B cell (primary cell): ENCODE measurements at regions of chr1 and their contacts with region 1.

Region 1: GRCh38 chr1:24930204-24931145 is at the start of gene RUNX3:
- DNase-seq: peak; percentile 97
- ATAC-seq: peak; percentile 85
- H3K4me3 ChIP-seq: peak within 1 kb of the TSS; percentile 74 to 93 (median 78)
- H3K4me3 Mint-ChIP-seq: peak within 1 kb of the TSS; percentile 98
- H3K27ac ChIP-seq: peak within 1 kb of the TSS; percentile 95 to 97
- H3K27ac Mint-ChIP-seq: peak within 1 kb of the TSS; percentile 99
- H3K4me1 ChIP-seq: peaks cover 67 to 77% of the 10 kb centered on the region in 2 donors
- H3K4me1 Mint-ChIP-seq: peaks cover 72% of the 10 kb centered on the region
- H3K27me3 ChIP-seq: no peaks in the 10 kb centered on the region
- H3K27me3 Mint-ChIP-seq: no peaks in the 10 kb centered on the region
- CTCF ChIP-seq: no peak
- total RNA-seq, gene RUNX3: 116 and 127 TPM in 2 replicates

Region 2: GRCh38 chr1:24594154-24594553 is 336.3 kb before region 1 on chr1:
- CTCF ChIA-PET with region 1: no interaction called
- POLR2A ChIA-PET with region 1: no interaction called
- intact Hi-C with region 1: no loop called
- DNase-seq: no peak
- ATAC-seq: no peak
- H3K4me3 ChIP-seq: no peak overlapping the region
- H3K4me3 Mint-ChIP-seq: no peak overlapping the region
- H3K27ac ChIP-seq: no peak overlapping the region
- H3K27ac Mint-ChIP-seq: no peak overlapping the region
- H3K4me1 ChIP-seq: no peaks in the 10 kb centered on the region
- H3K4me1 Mint-ChIP-seq: no peaks in the 10 kb centered on the region
- H3K27me3 ChIP-seq: peaks cover 0 to 7% (median 0%) of the 10 kb centered on the region in 4 experiments
- H3K27me3 Mint-ChIP-seq: peaks cover 17% of the 10 kb centered on the region
- CTCF ChIP-seq: no peak

Region 3: GRCh38 chr1:24635195-24635843 is 295.2 kb before region 1 on chr1:
- CTCF ChIA-PET with region 1: no interaction called
- POLR2A ChIA-PET with region 1: no interaction called
- intact Hi-C with region 1: no loop called
- DNase-seq: peak; percentile 68
- ATAC-seq: peak; percentile 68
- H3K4me3 ChIP-seq: no peak overlapping the region
- H3K4me3 Mint-ChIP-seq: no peak overlapping the region
- H3K27ac ChIP-seq: no peak overlapping the region
- H3K27ac Mint-ChIP-seq: peak overlapping the region; percentile 34
- H3K4me1 ChIP-seq: no peaks in the 10 kb centered on the region
- H3K4me1 Mint-ChIP-seq: peaks cover 2% of the 10 kb centered on the region
- H3K27me3 ChIP-seq: peaks cover 0 to 3% (median under 1%) of the 10 kb centered on the region in 4 experiments
- H3K27me3 Mint-ChIP-seq: peaks cover 8% of the 10 kb centered on the region
- CTCF ChIP-seq: peak; percentile 75

Region 4: GRCh38 chr1:24714859-24715520 is 215.5 kb before region 1 on chr1:
- CTCF ChIA-PET with region 1: no interaction called
- POLR2A ChIA-PET with region 1: no interaction called
- intact Hi-C with region 1: no loop called
- DNase-seq: no peak
- ATAC-seq: no peak
- H3K4me3 ChIP-seq: no peak overlapping the region
- H3K4me3 Mint-ChIP-seq: no peak overlapping the region
- H3K27ac ChIP-seq: no peak overlapping the region
- H3K27ac Mint-ChIP-seq: no peak overlapping the region
- H3K4me1 ChIP-seq: no peaks in the 10 kb centered on the region
- H3K4me1 Mint-ChIP-seq: no peaks in the 10 kb centered on the region
- H3K27me3 ChIP-seq: no peaks in the 10 kb centered on the region
- H3K27me3 Mint-ChIP-seq: no peaks in the 10 kb centered on the region
- CTCF ChIP-seq: no peak

Region 5: GRCh38 chr1:24847995-24848881 is 82.2 kb before region 1 on chr1:
- CTCF ChIA-PET with region 1: interaction called, 109 read pairs
- POLR2A ChIA-PET with region 1: interaction called, 8 read pairs
- intact Hi-C with region 1: loop called (anchors 1 kb)
- DNase-seq: peak; percentile 95
- ATAC-seq: peak; percentile 94
- H3K4me3 ChIP-seq: peak overlapping the region in 4 of 5 experiments; percentile 54 to 66 (median 64)
- H3K4me3 Mint-ChIP-seq: peak overlapping the region; percentile 80
- H3K27ac ChIP-seq: peak overlapping the region; percentile 68 to 83
- H3K27ac Mint-ChIP-seq: peak overlapping the region; percentile 78
- H3K4me1 ChIP-seq: peaks cover 4 to 13% of the 10 kb centered on the region in 2 donors
- H3K4me1 Mint-ChIP-seq: peaks cover 12% of the 10 kb centered on the region
- H3K27me3 ChIP-seq: no peaks in the 10 kb centered on the region
- H3K27me3 Mint-ChIP-seq: no peaks in the 10 kb centered on the region
- CTCF ChIP-seq: peak; percentile 94

Region 6: DNA sequence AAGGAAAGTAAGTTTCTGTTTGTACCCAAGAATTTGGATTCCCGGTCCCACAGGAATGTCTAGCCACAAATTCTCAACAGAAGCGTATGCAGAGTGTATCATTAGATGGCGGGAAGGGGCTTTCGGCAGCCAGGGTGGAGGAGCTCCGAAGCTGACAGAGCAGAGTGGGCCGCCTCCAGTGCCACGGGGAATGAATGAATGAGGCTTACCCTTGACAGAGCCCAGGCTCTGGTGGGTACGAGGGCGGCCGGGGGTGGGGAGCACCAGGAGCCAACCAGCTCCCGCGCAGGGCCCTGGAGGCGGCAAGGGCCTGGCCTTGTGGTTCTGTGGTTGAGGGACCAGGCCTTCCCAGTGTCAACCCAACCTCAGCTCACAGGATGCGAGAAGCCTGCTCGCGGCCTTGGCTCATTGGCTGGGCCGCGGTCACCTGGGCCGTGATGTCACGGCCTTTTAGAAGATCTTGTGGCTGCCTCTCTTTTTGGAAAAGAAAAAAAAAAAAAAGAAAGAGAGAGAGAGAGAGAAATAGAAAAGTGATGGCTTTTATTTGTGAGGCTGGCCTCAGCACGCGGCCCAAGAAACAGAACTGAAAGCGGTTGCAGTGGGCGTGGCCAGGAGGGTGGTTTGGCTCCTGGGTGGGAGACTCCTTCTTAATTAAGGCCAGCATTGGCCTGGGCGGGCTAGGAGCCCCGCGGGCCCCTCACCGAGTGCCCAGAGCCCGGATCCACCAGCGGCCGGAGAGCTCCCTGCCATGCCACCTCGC is 34.5 kb after region 1 on chr1:
- CTCF ChIA-PET with region 1: interaction called, 8 read pairs
- POLR2A ChIA-PET with region 1: interaction called, 17 read pairs
- intact Hi-C with region 1: no loop called
- DNase-seq: peak; percentile 93
- ATAC-seq: peak; percentile 88
- H3K4me3 ChIP-seq: peak overlapping the region in 4 of 5 experiments; percentile 10 to 40 (median 24)
- H3K4me3 Mint-ChIP-seq: peak overlapping the region; percentile 79
- H3K27ac ChIP-seq: peak overlapping the region; percentile 75 to 77
- H3K27ac Mint-ChIP-seq: peak overlapping the region; percentile 89
- H3K4me1 ChIP-seq: peaks cover 21 to 44% of the 10 kb centered on the region in 2 donors
- H3K4me1 Mint-ChIP-seq: peaks cover 50% of the 10 kb centered on the region
- H3K27me3 ChIP-seq: no peaks in the 10 kb centered on the region
- H3K27me3 Mint-ChIP-seq: no peaks in the 10 kb centered on the region
- CTCF ChIP-seq: no peak

Region 7: DNA sequence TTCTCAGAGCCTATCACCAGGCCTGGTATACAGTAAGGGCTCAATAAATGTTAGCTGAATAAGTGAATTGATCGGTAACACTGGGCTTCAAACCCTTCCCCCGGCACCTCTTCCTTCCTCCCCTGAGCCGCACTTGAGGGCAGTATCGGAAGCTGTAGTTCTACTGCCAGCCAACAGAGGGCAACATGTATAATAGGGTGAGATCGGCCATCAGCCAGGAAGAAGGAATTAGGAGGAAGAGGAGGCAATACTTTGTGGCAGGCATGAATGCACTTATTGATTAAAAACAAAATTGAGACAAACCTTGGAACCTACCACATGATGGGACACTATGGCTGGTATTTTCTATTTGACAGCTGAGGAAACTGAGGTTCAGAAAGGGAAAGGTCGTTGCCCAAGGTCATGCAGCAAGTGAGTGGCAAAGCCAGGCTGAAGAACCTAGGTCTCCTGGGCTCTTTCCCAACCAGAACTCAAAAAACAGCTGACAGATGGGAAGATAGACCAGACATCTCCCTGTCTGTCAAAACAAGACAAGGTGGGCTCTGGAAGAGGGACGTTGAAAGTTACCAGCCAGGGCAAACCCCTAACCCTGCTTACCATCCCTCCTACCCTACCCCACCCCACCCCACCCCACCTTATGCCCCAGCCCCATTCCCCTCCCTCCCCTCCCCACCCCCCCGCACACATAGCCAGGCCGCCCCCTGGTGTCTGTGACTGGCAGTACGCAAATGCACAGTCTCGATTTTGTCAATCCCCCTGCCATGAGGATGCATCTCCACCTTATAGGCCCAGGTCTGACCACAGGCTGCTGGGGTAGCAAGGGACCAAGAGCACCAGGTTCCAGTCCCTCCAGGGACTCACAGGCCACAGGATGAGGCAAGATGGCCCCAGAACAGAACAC is 106.9 kb after region 1 on chr1:
- CTCF ChIA-PET with region 1: interaction called, 320 read pairs
- POLR2A ChIA-PET with region 1: interaction called, 14 read pairs
- intact Hi-C with region 1: loop called (anchors 1 kb)
- DNase-seq: peak; percentile 74
- ATAC-seq: peak; percentile 65
- H3K4me3 ChIP-seq: no peak overlapping the region
- H3K4me3 Mint-ChIP-seq: peak overlapping the region; percentile 0
- H3K27ac ChIP-seq: no peak overlapping the region
- H3K27ac Mint-ChIP-seq: peak overlapping the region; percentile 63
- H3K4me1 ChIP-seq: peaks cover 36 to 49% of the 10 kb centered on the region in 2 donors
- H3K4me1 Mint-ChIP-seq: peaks cover 34% of the 10 kb centered on the region
- H3K27me3 ChIP-seq: peaks cover 0 to under 1% (median 0%) of the 10 kb centered on the region in 4 experiments
- H3K27me3 Mint-ChIP-seq: peaks cover 5% of the 10 kb centered on the region
- CTCF ChIP-seq: peak; percentile 71

Region 8: DNA sequence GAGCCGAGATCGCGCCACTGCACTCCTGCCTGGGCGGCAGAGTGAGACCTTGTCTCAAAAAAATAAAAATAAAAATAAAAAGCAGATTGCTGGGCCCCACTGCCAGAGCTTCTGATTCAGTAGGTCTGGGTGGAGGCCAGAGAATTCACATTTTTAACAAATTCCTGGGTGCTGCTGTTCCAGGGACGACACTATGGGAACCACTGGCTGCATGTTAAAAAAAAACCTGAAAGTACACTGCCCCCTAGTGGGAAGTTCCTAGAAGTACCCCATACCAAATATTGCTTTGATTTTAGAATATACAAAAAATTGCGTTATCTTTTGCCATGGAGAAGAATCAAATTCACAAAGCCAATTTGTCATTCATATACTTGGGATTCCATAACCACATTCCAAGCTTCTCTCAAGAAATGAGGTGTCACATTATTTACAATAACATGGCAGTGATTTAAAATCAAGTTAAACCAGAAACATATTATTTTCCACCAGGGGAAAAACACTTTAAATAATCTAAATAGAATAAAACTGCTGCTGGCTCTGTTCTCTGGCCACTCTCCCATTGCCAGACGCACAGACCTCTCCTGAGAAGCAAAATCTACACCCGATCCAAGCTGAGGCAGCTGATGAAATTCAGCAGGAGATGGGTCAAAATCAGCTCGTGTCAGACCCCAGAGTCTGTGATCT is 274.5 kb after region 1 on chr1:
- CTCF ChIA-PET with region 1: interaction called, 12 read pairs
- POLR2A ChIA-PET with region 1: no interaction called
- intact Hi-C with region 1: loop called (anchors 5 kb)
- DNase-seq: peak; percentile 63
- ATAC-seq: peak; percentile 49
- H3K4me3 ChIP-seq: no peak overlapping the region
- H3K4me3 Mint-ChIP-seq: no peak overlapping the region
- H3K27ac ChIP-seq: no peak overlapping the region
- H3K27ac Mint-ChIP-seq: no peak overlapping the region
- H3K4me1 ChIP-seq: no peaks in the 10 kb centered on the region
- H3K4me1 Mint-ChIP-seq: no peaks in the 10 kb centered on the region
- H3K27me3 ChIP-seq: peaks cover 0 to 7% (median 0%) of the 10 kb centered on the region in 4 experiments
- H3K27me3 Mint-ChIP-seq: peaks cover 12% of the 10 kb centered on the region
- CTCF ChIP-seq: peak; percentile 86